ENCODE measurements at regions of chr12 and their contacts with region 1.

Region 1: GRCh38 chr12:6723607-6724396 is at the start of gene COPS7A:
- DNase-seq: peak; percentile 92
- ATAC-seq: peak; percentile 93
- H3K4me3 Mint-ChIP-seq: peak within 1 kb of the TSS; percentile 89
- H3K27ac Mint-ChIP-seq: peak within 1 kb of the TSS; percentile 96
- H3K4me1 Mint-ChIP-seq: peaks cover 19% of the 10 kb centered on the region
- H3K27me3 Mint-ChIP-seq: no peaks in the 10 kb centered on the region
- CTCF ChIP-seq: no peak
- total RNA-seq, gene COPS7A: 28.1 and 35.8 TPM in 2 replicates

Region 2: DNA sequence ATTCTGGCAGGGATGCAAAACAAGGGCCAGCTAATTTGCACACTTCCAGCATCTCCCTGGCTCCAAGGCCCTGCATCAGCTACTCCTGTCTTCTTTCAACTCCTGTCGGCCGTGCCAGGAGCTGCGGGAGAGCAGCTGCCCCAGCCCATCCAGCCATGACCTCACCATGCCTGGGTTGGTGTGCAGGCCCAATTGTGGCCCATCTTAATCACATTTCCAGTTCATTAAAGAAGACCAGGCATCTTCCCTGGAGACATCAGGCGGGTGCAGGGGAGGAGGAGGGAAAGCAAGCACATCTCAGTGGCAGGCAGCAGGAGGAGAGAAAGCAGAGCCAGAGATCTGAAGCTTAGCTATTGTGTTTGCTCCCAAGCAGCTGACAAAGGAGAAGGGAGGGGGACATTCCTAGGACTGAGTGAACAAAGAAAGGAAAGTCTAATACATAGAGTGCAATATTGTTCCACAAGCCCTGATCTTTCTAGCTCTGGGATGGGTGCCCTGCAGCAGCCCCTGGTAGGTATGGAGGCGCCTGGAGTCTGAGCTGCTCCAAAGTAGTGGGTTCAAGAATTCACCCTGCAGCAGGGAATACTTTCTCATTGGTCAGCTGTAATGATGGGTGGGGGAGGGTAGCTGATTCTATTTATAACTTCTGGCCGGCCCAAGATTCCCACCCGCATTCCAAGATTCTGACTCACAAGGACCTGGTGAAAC is 639.4 kb before region 1 on chr12:
- CTCF ChIA-PET with region 1: no interaction called
- POLR2A ChIA-PET with region 1: no interaction called
- intact Hi-C with region 1: no loop called
- DNase-seq: no peak
- ATAC-seq: no peak
- H3K4me3 Mint-ChIP-seq: no peak overlapping the region
- H3K27ac Mint-ChIP-seq: no peak overlapping the region
- H3K4me1 Mint-ChIP-seq: no peaks in the 10 kb centered on the region
- H3K27me3 Mint-ChIP-seq: peaks cover 3% of the 10 kb centered on the region
- CTCF ChIP-seq: no peak

Region 3: DNA sequence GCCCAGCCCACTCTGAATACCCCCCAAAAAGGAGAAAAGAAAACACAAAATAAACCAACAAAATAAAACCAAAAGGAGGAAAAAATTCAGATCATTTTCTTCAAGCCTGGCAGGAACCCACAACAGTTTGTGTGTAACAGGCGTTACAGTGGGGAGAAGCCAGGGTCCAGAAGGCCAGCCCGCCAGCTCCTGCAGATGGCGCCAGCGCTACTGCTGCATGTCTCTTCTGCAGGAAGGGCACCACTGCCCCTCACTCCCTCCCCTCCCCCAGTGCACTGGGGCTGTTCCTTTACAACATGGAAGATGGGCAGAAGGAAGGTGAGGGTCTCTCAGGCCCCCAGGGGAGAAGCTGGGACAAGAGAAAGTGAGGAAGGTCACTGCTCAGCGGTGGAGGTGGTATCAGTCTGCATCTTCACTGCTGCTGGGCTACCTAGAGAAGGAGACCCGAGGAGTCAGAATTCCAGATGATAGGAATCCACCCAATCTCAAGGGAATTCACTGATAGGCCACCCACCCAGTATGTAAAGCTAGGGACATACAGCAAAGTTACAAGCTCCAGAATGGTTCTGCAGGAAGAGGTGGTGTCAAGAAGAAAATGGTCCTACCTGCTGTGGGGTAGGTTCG is 153.4 kb before region 1 on chr12:
- CTCF ChIA-PET with region 1: no interaction called
- POLR2A ChIA-PET with region 1: interaction called, 10 read pairs
- intact Hi-C with region 1: no loop called
- DNase-seq: peak; percentile 37
- ATAC-seq: no peak
- H3K4me3 Mint-ChIP-seq: no peak overlapping the region
- H3K27ac Mint-ChIP-seq: peak overlapping the region; percentile 41
- H3K4me1 Mint-ChIP-seq: peaks cover 28% of the 10 kb centered on the region
- H3K27me3 Mint-ChIP-seq: no peaks in the 10 kb centered on the region
- CTCF ChIP-seq: no peak

Region 4: DNA sequence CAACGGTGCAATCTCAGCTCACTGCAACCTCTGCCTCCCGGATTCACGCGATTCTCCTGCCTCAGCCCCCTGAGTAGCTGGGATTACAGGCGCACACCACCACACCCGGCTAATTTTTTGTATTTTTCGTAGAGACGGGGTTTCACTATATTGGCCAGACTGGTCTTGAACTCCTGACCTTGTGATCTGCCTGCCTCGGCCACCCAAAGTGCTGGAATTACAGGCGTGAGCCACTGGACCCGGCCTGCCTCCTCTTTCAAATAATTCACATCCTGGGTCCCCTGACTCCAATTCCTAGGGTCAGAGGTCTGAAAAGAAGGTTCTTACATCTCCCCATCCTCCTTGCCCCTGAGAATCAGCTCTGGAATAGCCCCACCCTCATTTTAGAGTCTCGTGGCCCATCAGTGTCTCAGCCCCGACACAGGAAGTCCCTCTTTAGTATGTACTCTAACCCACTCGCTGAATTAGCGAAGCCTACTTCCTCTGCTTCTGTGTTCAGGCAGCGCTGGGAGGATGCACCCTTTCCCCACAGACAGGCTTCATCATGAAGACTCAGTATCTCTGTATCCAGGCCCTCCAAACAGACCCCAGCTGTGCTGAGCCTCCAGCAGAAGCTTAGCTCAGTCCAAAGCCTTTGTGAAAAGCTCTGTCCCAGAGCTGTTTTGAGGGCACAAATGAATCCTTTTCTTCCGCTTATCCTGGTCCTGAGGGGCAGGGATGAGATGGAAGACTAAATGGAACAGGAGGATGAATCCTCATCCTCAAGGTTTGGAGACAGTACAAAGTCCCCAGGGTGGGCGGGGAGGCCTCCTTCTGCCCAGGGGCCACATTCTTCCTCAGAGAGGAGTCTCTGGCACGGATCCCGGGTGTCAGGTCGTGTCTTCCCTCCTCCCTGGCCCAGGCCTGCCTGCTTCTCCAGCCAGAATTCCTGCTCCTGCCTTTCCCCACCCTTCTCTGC is 91.5 kb before region 1 on chr12:
- CTCF ChIA-PET with region 1: no interaction called
- POLR2A ChIA-PET with region 1: interaction called, 14 read pairs
- intact Hi-C with region 1: no loop called
- DNase-seq: peak; percentile 51
- ATAC-seq: peak; percentile 53
- H3K4me3 Mint-ChIP-seq: peak overlapping the region; percentile 86
- H3K27ac Mint-ChIP-seq: peak overlapping the region; percentile 98
- H3K4me1 Mint-ChIP-seq: peaks cover 84% of the 10 kb centered on the region
- H3K27me3 Mint-ChIP-seq: no peaks in the 10 kb centered on the region
- CTCF ChIP-seq: no peak

Region 5: DNA sequence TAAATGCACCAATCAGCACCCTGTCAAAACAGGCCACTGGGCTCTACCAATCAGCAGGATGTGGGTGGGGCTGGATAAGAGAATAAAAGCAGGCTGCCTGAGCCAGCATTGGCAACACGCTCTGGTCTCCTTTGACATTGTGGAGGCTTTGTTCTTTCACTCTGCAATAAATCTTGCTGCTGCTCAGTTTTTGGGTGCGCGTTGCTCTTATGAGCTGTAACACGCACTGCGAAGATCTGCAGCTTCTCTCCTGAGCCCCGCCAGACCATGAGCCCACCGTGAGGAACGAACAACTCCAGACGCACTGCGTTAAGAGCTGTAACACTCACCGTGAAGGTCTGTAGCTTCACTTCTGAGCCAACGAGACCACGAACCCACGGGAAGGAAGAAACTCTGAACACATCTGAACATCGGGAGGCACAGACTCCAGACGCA is 14.8 kb before region 1 on chr12:
- CTCF ChIA-PET with region 1: no interaction called
- POLR2A ChIA-PET with region 1: interaction called, 32 read pairs
- intact Hi-C with region 1: loop called (anchors 2 kb)
- DNase-seq: no peak
- ATAC-seq: no peak
- H3K4me3 Mint-ChIP-seq: peak overlapping the region; percentile 81
- H3K27ac Mint-ChIP-seq: peak overlapping the region; percentile 43
- H3K4me1 Mint-ChIP-seq: peaks cover 9% of the 10 kb centered on the region
- H3K27me3 Mint-ChIP-seq: peaks cover 21% of the 10 kb centered on the region
- CTCF ChIP-seq: no peak

Region 6: DNA sequence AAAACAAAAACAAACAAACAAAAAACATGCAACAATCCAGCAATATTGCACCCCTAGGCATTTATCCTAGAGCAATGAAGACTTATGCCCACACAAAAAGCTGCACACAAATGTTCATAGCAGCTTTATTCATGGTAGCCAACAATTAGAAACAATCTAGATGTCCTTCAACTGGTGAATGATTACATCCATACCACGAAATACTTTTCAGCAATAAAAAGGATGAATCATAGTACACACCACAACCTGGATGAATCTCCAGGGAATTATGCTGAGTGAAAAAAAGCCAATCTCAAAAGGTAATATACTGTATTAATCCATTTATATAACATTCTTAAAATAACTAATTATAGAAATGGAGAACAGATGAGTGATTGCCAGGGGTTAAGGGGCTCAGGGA is 83.4 kb after region 1 on chr12:
- CTCF ChIA-PET with region 1: no interaction called
- POLR2A ChIA-PET with region 1: no interaction called
- intact Hi-C with region 1: no loop called
- DNase-seq: no peak
- ATAC-seq: no peak
- H3K4me3 Mint-ChIP-seq: no peak overlapping the region
- H3K27ac Mint-ChIP-seq: no peak overlapping the region
- H3K4me1 Mint-ChIP-seq: peaks cover 1% of the 10 kb centered on the region
- H3K27me3 Mint-ChIP-seq: peaks cover 2% of the 10 kb centered on the region
- CTCF ChIP-seq: no peak

Region 7: GRCh38 chr12:6873094-6874014 is 149.6 kb after region 1 on chr12 and contains the start of gene SPSB2:
- CTCF ChIA-PET with region 1: interaction called, 3 read pairs
- POLR2A ChIA-PET with region 1: interaction called, 10 read pairs
- intact Hi-C with region 1: no loop called
- DNase-seq: peak; percentile 100
- ATAC-seq: peak; percentile 88
- H3K4me3 Mint-ChIP-seq: peak within 1 kb of the TSS; percentile 88
- H3K27ac Mint-ChIP-seq: peak within 1 kb of the TSS; percentile 85
- H3K4me1 Mint-ChIP-seq: peaks cover 37% of the 10 kb centered on the region
- H3K27me3 Mint-ChIP-seq: no peaks in the 10 kb centered on the region
- CTCF ChIP-seq: no peak
- total RNA-seq, gene SPSB2: 14.4 and 16.2 TPM in 2 replicates

Region 8: GRCh38 chr12:6965026-6965661 is 241.3 kb after region 1 on chr12:
- CTCF ChIA-PET with region 1: no interaction called
- POLR2A ChIA-PET with region 1: interaction called, 5 read pairs
- intact Hi-C with region 1: loop called (anchors 1 kb)
- DNase-seq: peak; percentile 76
- ATAC-seq: peak; percentile 64
- H3K4me3 Mint-ChIP-seq: peak overlapping the region; percentile 11
- H3K27ac Mint-ChIP-seq: peak overlapping the region; percentile 86
- H3K4me1 Mint-ChIP-seq: peaks cover 69% of the 10 kb centered on the region
- H3K27me3 Mint-ChIP-seq: no peaks in the 10 kb centered on the region
- CTCF ChIP-seq: no peak